Testis (tissue), 5 donors: ENCODE measurements at regions of chr17 and their contacts with region 1.

Region 1: GRCh38 chr17:33545124-33545523 is 252.0 kb upstream of the ASIC2 start:
- DNase-seq: no peak
- H3K4me3 ChIP-seq: no peak overlapping the region
- H3K27ac ChIP-seq: no peak overlapping the region
- H3K4me1 ChIP-seq: no peaks in the 10 kb centered on the region
- H3K27me3 ChIP-seq: no peaks in the 10 kb centered on the region
- CTCF ChIP-seq: no peak
- POLR2A ChIP-seq: no peak

Region 2: GRCh38 chr17:33602981-33603380 is 57.9 kb after region 1 on chr17:
- intact Hi-C with region 1: loop called (anchors 10 kb)
- DNase-seq: no peak
- H3K4me3 ChIP-seq: no peak overlapping the region
- H3K27ac ChIP-seq: no peak overlapping the region
- H3K4me1 ChIP-seq: no peaks in the 10 kb centered on the region
- H3K27me3 ChIP-seq: no peaks in the 10 kb centered on the region
- CTCF ChIP-seq: no peak
- POLR2A ChIP-seq: no peak

Region 3: DNA sequence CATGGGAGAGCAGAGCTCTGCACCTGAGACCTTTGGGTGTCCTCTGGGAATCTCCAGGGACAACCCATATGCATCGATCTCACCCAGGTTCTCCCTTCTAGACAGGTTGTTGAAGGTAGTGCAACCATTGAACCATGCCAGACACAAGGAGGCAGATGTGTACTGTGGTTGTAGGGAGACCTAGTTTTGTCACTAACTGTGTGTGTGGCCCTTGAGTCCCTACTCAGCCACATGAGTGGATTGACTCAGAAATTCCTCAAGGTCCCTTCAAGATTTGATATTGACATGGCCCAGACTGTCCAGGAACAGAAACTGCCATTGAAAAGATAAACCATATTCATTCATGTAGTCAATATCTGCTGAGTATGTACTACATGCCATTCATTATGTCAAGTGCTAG is 313.6 kb after region 1 on chr17:
- intact Hi-C with region 1: no loop called
- DNase-seq: no peak
- H3K4me3 ChIP-seq: no peak overlapping the region
- H3K27ac ChIP-seq: no peak overlapping the region
- H3K4me1 ChIP-seq: no peaks in the 10 kb centered on the region
- H3K27me3 ChIP-seq: no peaks in the 10 kb centered on the region
- CTCF ChIP-seq: no peak
- POLR2A ChIP-seq: no peak